Activated CD4-positive, alpha-beta memory T cell treated with anti-CD3 and anti-CD28 coated beads for 36 hours (primary cell): ENCODE measurements at regions of chr17 and their contacts with region 1.

Region 1: DNA sequence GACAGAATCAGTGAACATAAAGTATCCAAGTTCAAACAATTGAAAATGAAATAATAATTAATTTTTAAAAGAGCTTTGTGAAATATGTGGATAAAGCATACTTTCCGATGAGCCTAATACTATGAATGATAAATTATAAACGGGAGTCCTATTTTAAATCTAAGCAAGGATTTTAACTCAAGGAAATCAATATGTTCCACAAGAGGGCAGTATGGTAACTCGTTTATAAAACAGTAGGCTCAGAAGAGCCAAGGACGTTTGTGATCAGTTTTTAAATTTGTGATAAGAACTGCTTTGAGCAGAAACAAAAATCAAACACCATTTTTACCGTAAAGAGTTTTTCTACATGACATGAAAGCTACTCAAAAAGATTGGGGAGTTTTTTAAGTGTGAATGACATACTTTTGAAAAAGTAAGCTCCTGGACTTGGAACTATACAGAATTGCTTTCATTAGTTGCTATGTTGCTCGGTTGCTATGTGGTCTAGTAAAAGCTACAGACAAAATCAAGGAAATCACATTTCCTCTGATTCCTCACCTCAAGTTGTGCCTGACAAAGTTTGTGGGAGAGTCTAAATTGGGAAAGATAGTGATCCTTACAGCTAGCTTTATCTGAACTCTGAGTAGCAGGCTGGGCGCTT is 11.8 kb upstream of the TEKT1 start:
- DNase-seq: no peak
- H3K4me3 Mint-ChIP-seq: no peak overlapping the region
- H3K27ac Mint-ChIP-seq: no peak overlapping the region
- H3K4me1 Mint-ChIP-seq: no peaks in the 10 kb centered on the region
- H3K27me3 Mint-ChIP-seq: peaks cover 30% of the 10 kb centered on the region

Region 2: GRCh38 chr17:6666077-6666521 is 177.3 kb before region 1 on chr17:
- CTCF ChIA-PET with region 1: interaction called, 23 read pairs
- POLR2A ChIA-PET with region 1: no interaction called
- intact Hi-C with region 1: loop called (anchors 2 kb)
- DNase-seq: peak; percentile 65
- H3K4me3 Mint-ChIP-seq: no peak overlapping the region
- H3K27ac Mint-ChIP-seq: no peak overlapping the region
- H3K4me1 Mint-ChIP-seq: peaks cover 7% of the 10 kb centered on the region
- H3K27me3 Mint-ChIP-seq: no peaks in the 10 kb centered on the region

Region 3: GRCh38 chr17:6761779-6762178 is 81.6 kb before region 1 on chr17:
- CTCF ChIA-PET with region 1: no interaction called
- POLR2A ChIA-PET with region 1: no interaction called
- intact Hi-C with region 1: no loop called
- DNase-seq: no peak
- H3K4me3 Mint-ChIP-seq: no peak overlapping the region
- H3K27ac Mint-ChIP-seq: no peak overlapping the region
- H3K4me1 Mint-ChIP-seq: peaks cover 16% of the 10 kb centered on the region
- H3K27me3 Mint-ChIP-seq: no peaks in the 10 kb centered on the region

Region 4: DNA sequence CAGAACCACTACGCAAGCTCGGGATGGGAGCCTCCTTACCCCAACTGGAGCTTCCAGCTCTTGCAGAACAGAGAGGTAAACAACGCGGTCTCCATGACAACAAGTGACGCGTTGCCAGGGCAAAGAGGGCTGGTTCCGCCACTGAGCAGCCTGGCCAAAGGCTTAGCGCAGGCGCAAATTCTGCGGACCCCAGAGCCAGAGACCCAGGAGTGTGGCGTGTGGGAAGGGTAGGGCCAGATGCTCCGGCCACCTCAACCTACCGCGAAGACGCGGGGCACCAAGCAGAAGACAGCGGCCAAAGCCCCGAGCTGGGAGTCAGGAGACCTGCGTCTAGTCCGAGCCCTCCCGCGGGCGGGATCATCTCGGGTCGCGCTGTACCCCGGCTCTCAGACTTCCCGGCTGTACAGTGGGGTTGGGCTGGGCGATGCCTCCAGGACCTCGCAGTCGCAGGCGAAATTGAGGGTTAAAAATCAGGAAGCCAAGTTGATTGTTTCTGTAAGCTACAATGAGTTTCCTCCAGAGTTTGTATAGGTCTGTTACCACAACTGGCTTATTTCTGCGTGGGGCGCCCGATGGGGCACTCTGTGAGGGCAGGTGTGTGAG is 11.6 kb before region 1 on chr17 and contains the start of gene TEKT1:
- CTCF ChIA-PET with region 1: interaction called, 17 read pairs
- POLR2A ChIA-PET with region 1: no interaction called
- intact Hi-C with region 1: no loop called
- DNase-seq: peak; percentile 72
- H3K4me3 Mint-ChIP-seq: peak within 1 kb of the TSS; percentile 48
- H3K27ac Mint-ChIP-seq: no peak within 1 kb of the TSS
- H3K4me1 Mint-ChIP-seq: peaks cover 13% of the 10 kb centered on the region
- H3K27me3 Mint-ChIP-seq: peaks cover 35% of the 10 kb centered on the region
- total RNA-seq, gene TEKT1: not detected

Region 5: DNA sequence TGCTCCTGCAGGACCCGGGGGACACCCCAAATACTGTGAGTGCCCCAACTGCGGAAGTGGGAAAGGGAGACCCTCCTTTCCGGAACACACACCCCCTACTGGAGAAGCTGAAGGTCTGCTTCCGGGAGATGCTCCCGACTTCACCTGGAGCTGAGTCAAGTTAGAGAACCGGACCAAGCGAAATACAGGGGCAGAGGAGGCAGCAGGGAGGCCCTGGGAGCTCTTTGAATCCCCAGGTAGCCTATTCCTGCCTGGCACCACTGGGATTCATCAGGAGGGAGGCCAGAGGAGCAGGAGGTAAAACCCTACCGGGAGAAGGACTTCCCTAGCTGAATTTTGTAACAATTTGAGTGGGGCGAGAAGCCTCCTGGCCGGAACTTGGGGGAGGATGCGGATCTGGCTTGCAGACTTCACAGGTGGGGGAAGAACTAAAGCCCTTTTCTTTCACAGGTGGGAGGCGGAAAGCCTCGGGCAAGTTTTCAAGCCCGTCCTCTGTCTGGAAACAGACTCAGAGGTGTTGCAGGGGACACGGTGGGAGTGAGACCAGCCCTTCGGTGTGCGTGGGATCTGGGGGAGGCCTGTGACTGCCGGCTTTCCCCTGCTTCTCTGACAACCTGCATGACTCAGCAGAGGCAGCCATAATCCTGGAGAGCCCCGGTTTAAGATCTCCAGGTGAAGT is 10.5 kb after region 1 on chr17:
- CTCF ChIA-PET with region 1: interaction called, 15 read pairs
- POLR2A ChIA-PET with region 1: no interaction called
- intact Hi-C with region 1: no loop called
- DNase-seq: no peak
- H3K4me3 Mint-ChIP-seq: no peak overlapping the region
- H3K27ac Mint-ChIP-seq: no peak overlapping the region
- H3K4me1 Mint-ChIP-seq: no peaks in the 10 kb centered on the region
- H3K27me3 Mint-ChIP-seq: peaks cover 13% of the 10 kb centered on the region

Region 6: DNA sequence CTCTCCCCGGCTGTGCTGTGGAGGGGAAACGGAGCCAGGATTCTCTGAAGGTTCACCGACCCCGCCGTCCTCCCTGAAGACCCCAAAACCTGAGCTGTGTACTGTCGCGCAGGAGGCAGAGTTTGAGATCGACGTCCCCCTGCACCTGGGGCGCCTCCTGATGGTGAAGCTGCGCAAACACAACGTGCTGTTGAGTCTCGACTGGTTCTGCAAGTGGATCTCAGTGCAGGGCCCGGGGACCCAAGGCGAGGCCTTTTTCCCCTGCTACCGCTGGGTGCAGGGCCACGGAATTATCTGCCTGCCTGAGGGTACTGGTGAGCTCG is 50.8 kb after region 1 on chr17:
- CTCF ChIA-PET with region 1: interaction called, 30 read pairs
- POLR2A ChIA-PET with region 1: no interaction called
- intact Hi-C with region 1: loop called (anchors 10 kb)
- DNase-seq: peak; percentile 59
- H3K4me3 Mint-ChIP-seq: no peak overlapping the region
- H3K27ac Mint-ChIP-seq: no peak overlapping the region
- H3K4me1 Mint-ChIP-seq: peaks cover 3% of the 10 kb centered on the region
- H3K27me3 Mint-ChIP-seq: peaks cover 62% of the 10 kb centered on the region

Region 7: GRCh38 chr17:7004398-7005253 is 161.3 kb after region 1 on chr17:
- CTCF ChIA-PET with region 1: interaction called, 43 read pairs
- POLR2A ChIA-PET with region 1: no interaction called
- intact Hi-C with region 1: loop called (anchors 1 kb)
- DNase-seq: no peak
- H3K4me3 Mint-ChIP-seq: no peak overlapping the region
- H3K27ac Mint-ChIP-seq: peak overlapping the region; percentile 49
- H3K4me1 Mint-ChIP-seq: peaks cover 22% of the 10 kb centered on the region
- H3K27me3 Mint-ChIP-seq: no peaks in the 10 kb centered on the region